ENCODE measurements at regions of chr2 and their contacts with region 1.

Region 1: GRCh38 chr2:38076606-38077430 is 867 bp upstream of the CYP1B1 start:
- DNase-seq: peak; percentile 92 to 97 (median 94)
- H3K4me3 ChIP-seq: peak overlapping the region; percentile 60 to 93 (median 84)
- H3K4me3 Mint-ChIP-seq: peak overlapping the region; percentile 94 to 98
- H3K27ac ChIP-seq: peak overlapping the region; percentile 94 to 96
- H3K27ac Mint-ChIP-seq: peak overlapping the region; percentile 80 to 94 (median 90)
- H3K4me1 ChIP-seq: peaks cover 48 to 81% of the 10 kb centered on the region in 2 donors
- H3K4me1 Mint-ChIP-seq: peaks cover 66% of the 10 kb centered on the region
- H3K27me3 ChIP-seq: peaks cover 0 to 19% of the 10 kb centered on the region in 2 donors
- H3K27me3 Mint-ChIP-seq: peaks cover 36 to 48% (median 46%) of the 10 kb centered on the region in 3 donors
- CTCF ChIP-seq: peak; percentile 46

Region 2: GRCh38 chr2:37947306-37947705 is 129.5 kb before region 1 on chr2:
- intact Hi-C with region 1: no loop called
- DNase-seq: no peak
- H3K4me3 ChIP-seq: no peak overlapping the region
- H3K4me3 Mint-ChIP-seq: no peak overlapping the region
- H3K27ac ChIP-seq: no peak overlapping the region
- H3K27ac Mint-ChIP-seq: no peak overlapping the region
- H3K4me1 ChIP-seq: no peaks in the 10 kb centered on the region
- H3K4me1 Mint-ChIP-seq: peaks cover 2% of the 10 kb centered on the region
- H3K27me3 ChIP-seq: no peaks in the 10 kb centered on the region
- H3K27me3 Mint-ChIP-seq: peaks cover 0 to 2% (median 0%) of the 10 kb centered on the region in 3 donors
- CTCF ChIP-seq: no peak

Region 3: GRCh38 chr2:37982147-37982582 is 94.7 kb before region 1 on chr2:
- intact Hi-C with region 1: loop called in 1 of 2 experiments (anchors 5 kb)
- DNase-seq: peak; percentile 36 to 65 (median 46)
- H3K4me3 ChIP-seq: peak overlapping the region in 1 of 3 experiments; percentile 19
- H3K4me3 Mint-ChIP-seq: peak overlapping the region in 1 of 2 donors; percentile 66
- H3K27ac ChIP-seq: no peak overlapping the region
- H3K27ac Mint-ChIP-seq: peak overlapping the region in 1 of 7 donors; percentile 72
- H3K4me1 ChIP-seq: peaks cover 10 to 24% of the 10 kb centered on the region in 2 donors
- H3K4me1 Mint-ChIP-seq: peaks cover 20% of the 10 kb centered on the region
- H3K27me3 ChIP-seq: no peaks in the 10 kb centered on the region
- H3K27me3 Mint-ChIP-seq: peaks cover 0 to 3% (median 2%) of the 10 kb centered on the region in 3 donors
- CTCF ChIP-seq: peak; percentile 95

Region 4: DNA sequence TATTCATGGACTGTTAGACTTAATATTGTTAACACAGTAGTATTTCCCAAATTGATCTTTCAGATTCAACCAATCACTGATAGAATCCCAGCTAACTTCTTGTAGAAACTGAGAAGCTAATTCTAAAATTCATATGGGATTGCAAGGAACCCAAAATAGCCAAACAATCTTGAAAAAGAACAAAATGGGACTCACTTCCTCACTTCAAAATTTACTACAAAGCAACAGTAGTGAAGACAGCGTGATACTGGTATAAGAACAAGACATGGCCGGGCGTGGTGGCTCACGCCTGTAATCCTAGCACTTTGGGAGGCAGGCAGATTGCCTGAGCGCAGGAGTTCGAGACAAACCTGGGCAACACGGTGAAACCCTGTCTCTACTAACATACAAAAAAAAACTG is 253.9 kb after region 1 on chr2:
- intact Hi-C with region 1: no loop called
- DNase-seq: no peak
- H3K4me3 ChIP-seq: no peak overlapping the region
- H3K4me3 Mint-ChIP-seq: no peak overlapping the region
- H3K27ac ChIP-seq: no peak overlapping the region
- H3K27ac Mint-ChIP-seq: no peak overlapping the region
- H3K4me1 ChIP-seq: no peaks in the 10 kb centered on the region
- H3K4me1 Mint-ChIP-seq: peaks cover 6% of the 10 kb centered on the region
- H3K27me3 ChIP-seq: no peaks in the 10 kb centered on the region
- H3K27me3 Mint-ChIP-seq: no peaks in the 10 kb centered on the region
- CTCF ChIP-seq: no peak